ENCODE measurements at regions of chr9 and their contacts with region 1.

Region 1: DNA sequence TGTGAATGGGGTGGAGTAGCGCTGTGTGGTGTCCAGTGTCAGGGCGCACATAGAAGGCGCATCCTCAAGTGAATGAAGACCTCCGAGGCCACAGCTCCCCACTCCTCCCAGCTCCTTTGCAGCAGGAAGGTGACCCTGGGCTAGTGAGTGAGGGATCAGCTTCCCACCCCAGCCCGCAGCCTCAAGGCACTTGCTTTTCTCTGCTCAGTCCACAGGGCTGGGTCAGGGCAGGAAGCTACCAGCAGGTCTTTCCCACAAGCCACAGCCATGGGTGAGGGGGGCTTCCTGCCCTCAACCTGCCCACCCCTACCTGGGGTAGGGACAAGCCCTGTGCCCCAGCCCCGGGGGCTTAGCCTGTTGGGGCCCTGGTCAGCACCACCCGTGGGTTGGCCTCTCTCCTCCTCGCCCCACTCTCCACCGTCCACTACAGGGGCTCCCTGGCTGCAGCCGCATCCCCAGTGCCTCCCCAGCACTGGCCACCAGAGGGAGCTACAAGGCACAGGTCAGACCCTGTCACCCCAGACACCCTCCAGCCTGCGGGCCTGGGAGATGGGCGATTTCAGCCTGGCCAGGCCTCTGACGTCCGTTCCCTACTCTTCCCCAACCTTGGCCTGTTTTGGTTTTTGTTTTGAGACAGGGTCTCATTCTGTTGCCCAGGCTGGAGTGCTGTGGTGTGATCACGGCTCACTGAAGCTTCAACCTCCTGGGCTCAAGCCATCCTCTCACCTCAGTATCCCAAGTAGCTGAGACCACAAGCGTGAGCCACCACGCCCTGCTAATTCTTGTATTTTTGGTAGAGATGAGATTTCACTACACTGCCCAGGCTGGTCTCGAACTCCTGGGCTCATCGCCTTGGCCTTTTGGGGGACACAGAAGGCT is 1.3 kb upstream of the ABCA2 start:
- DNase-seq: peak; percentile 84
- H3K4me3 Mint-ChIP-seq: peak overlapping the region; percentile 55
- H3K27ac Mint-ChIP-seq: peak overlapping the region; percentile 1
- H3K4me1 Mint-ChIP-seq: peaks cover 46% of the 10 kb centered on the region
- H3K27me3 Mint-ChIP-seq: no peaks in the 10 kb centered on the region

Region 2: GRCh38 chr9:136728080-136728547 is 301.2 kb before region 1 on chr9:
- CTCF ChIA-PET with region 1: interaction called, 14 read pairs
- POLR2A ChIA-PET with region 1: interaction called, 3 read pairs
- intact Hi-C with region 1: no loop called
- DNase-seq: peak; percentile 93
- H3K4me3 Mint-ChIP-seq: peak overlapping the region; percentile 99
- H3K27ac Mint-ChIP-seq: no peak overlapping the region
- H3K4me1 Mint-ChIP-seq: peaks cover 38% of the 10 kb centered on the region
- H3K27me3 Mint-ChIP-seq: no peaks in the 10 kb centered on the region

Region 3: GRCh38 chr9:136902259-136902821 is 127.0 kb before region 1 on chr9:
- CTCF ChIA-PET with region 1: interaction called, 6 read pairs
- POLR2A ChIA-PET with region 1: no interaction called
- intact Hi-C with region 1: loop called (anchors 5 kb)
- DNase-seq: peak; percentile 95
- H3K4me3 Mint-ChIP-seq: peak overlapping the region; percentile 70
- H3K27ac Mint-ChIP-seq: peak overlapping the region; percentile 98
- H3K4me1 Mint-ChIP-seq: peaks cover 51% of the 10 kb centered on the region
- H3K27me3 Mint-ChIP-seq: no peaks in the 10 kb centered on the region

Region 4: GRCh38 chr9:136991993-136992818 is 37.1 kb before region 1 on chr9 and contains the start of gene PAXX:
- CTCF ChIA-PET with region 1: interaction called, 24 read pairs
- POLR2A ChIA-PET with region 1: interaction called, 12 read pairs
- intact Hi-C with region 1: loop called (anchors 5 kb)
- DNase-seq: peak; percentile 96
- H3K4me3 Mint-ChIP-seq: peak within 1 kb of the TSS; percentile 82
- H3K27ac Mint-ChIP-seq: peak within 1 kb of the TSS; percentile 79
- H3K4me1 Mint-ChIP-seq: peaks cover 18% of the 10 kb centered on the region
- H3K27me3 Mint-ChIP-seq: peaks cover 4% of the 10 kb centered on the region
- total RNA-seq, gene PAXX: 71.0 to 71.2 TPM

Region 5: DNA sequence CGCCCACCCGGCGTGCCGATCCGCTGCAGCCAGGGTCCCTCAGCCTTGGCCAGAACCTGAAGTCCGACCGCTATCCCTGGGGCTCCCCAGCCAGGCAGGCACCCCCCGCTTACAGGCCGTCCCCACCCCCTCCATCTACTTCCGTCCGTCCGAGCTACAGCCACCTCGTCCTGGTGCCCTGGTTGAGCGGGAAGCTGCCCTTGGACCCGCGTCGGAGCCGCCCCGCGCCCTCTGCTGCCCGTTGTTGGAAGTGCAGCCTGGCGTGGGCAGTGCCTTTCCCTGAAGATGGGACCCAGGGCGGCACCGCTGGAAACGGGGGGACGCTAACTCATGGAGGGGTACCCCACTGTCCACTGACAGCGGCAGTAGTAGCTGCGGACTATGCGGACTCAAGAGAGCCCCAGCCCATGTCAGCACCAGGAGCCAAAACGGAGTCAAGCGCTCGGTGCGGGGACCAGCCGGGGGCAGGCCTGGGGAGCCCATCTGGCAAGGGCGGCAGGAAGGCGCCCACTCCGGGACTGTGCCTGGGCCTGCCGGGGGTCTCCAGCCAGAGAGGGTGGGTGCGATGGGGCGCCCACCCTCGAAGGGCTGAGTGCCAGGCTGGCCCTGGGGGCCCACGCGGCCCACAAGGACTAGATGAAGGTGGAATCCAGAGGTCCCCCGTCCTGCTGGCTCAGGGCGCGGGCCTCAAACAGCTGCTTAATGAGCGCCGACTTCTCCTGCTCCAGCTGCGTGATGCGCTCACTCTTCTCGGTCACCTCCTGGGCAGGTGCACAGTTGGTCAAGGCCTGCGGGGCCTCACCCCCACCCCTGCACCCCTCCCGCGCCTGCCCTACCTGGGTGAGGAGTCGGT is 35.0 kb after region 1 on chr9:
- CTCF ChIA-PET with region 1: interaction called, 73 read pairs
- POLR2A ChIA-PET with region 1: no interaction called
- intact Hi-C with region 1: loop called (anchors 5 kb)
- DNase-seq: peak; percentile 68
- H3K4me3 Mint-ChIP-seq: no peak overlapping the region
- H3K27ac Mint-ChIP-seq: peak overlapping the region; percentile 44
- H3K4me1 Mint-ChIP-seq: peaks cover 4% of the 10 kb centered on the region
- H3K27me3 Mint-ChIP-seq: no peaks in the 10 kb centered on the region

Region 6: GRCh38 chr9:137095664-137096517 is 66.6 kb after region 1 on chr9:
- CTCF ChIA-PET with region 1: interaction called, 18 read pairs
- POLR2A ChIA-PET with region 1: no interaction called
- intact Hi-C with region 1: no loop called
- DNase-seq: peak; percentile 93
- H3K4me3 Mint-ChIP-seq: peak overlapping the region; percentile 62
- H3K27ac Mint-ChIP-seq: peak overlapping the region; percentile 84
- H3K4me1 Mint-ChIP-seq: peaks cover 19% of the 10 kb centered on the region
- H3K27me3 Mint-ChIP-seq: no peaks in the 10 kb centered on the region